Panc1 (cell line): ENCODE measurements at regions of chr5 and their contacts with region 1.

Region 1: GRCh38 chr5:138192826-138193225 is 13.9 kb downstream of the KIF20A start:
- DNase-seq: no peak
- ATAC-seq: no peak
- H3K4me3 ChIP-seq: no peak overlapping the region
- H3K27ac ChIP-seq: no peak overlapping the region
- H3K4me1 ChIP-seq: no peaks in the 10 kb centered on the region
- H3K27me3 ChIP-seq: no peaks in the 10 kb centered on the region
- CTCF ChIP-seq: no peak

Region 2: GRCh38 chr5:138178516-138179276 is 14.1 kb before region 1 on chr5 and contains the starts of genes BRD8 and KIF20A:
- CTCF ChIA-PET with region 1: no interaction called
- POLR2A ChIA-PET with region 1: interaction called, 10 read pairs
- in situ Hi-C with region 1: no loop called
- intact Hi-C with region 1: no loop called
- DNase-seq: peak; percentile 98
- ATAC-seq: peak; percentile 94
- H3K4me3 ChIP-seq: peak within 1 kb of the TSS; percentile 93 to 97
- H3K27ac ChIP-seq: peak within 1 kb of the TSS; percentile 100
- H3K4me1 ChIP-seq: peaks cover 22% of the 10 kb centered on the region
- H3K27me3 ChIP-seq: no peaks in the 10 kb centered on the region
- CTCF ChIP-seq: no peak
- total RNA-seq, gene BRD8: 92.1 TPM
- total RNA-seq, gene KIF20A: 55.4 TPM

Region 3: DNA sequence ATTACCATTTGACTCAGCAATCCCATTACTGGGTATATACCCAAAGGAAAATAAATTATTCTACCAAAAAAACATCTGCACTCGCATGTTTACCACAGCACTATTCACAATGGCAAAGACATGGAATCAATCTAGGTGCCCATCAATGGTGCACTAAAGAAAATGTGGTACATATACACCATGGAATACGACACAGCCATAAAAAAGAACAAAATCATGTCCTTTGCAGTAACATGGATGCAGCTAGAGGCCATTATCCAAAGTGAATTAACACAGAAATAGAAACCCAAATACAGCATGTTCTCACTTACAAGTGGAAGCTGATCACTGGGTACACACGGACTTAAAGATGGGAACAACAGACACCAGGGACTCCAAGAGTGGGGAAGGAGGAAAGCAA is 18.2 kb after region 1 on chr5:
- CTCF ChIA-PET with region 1: no interaction called
- POLR2A ChIA-PET with region 1: interaction called, 10 read pairs
- in situ Hi-C with region 1: no loop called
- intact Hi-C with region 1: no loop called
- DNase-seq: no peak
- ATAC-seq: no peak
- H3K4me3 ChIP-seq: no peak overlapping the region
- H3K27ac ChIP-seq: no peak overlapping the region
- H3K4me1 ChIP-seq: peaks cover 13% of the 10 kb centered on the region
- H3K27me3 ChIP-seq: no peaks in the 10 kb centered on the region
- CTCF ChIP-seq: no peak

Region 4: DNA sequence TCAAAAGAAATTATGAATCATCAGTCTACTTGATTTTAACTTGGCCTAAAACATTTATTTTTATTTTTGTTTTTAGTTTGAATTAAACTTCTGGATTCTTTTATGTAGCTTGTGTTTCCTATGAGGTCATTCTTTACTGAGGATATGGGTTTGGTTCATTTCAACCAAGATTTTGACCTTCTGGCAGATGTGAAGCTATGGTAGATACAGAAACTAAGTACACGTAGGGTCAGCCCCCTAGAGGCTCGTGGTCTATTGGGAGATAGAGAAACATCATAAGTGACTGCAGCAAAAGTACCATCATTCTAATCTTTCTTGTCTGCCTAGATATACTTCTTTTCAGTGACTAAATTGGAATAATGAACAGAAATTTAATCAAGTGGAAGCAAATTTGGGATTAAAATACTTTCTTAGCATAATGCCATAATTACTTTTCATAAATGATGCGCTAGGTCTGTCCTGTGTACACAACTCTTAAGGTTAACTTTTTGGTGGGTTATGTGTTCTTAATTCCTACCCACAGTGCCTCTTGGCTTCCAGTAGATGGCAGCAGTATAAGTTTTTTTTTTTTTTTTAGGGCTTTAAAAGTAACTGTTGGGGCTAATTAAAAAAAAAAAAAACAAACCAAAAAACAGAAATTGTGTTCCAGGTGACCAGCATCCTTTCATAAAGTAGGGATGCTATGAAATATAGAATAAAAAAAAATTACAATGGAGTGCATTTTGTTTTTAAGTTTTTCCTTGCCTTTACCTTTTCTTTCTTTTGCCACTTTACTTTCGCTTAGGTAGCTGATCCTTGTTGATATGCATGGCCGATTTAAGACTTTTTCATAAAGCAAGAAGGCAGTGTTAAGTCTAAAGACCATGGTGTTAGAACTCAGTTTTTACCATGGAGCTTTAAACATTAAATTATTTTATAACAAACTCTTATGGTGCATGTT is 632.4 kb after region 1 on chr5:
- CTCF ChIA-PET with region 1: no interaction called
- POLR2A ChIA-PET with region 1: no interaction called
- in situ Hi-C with region 1: no loop called
- intact Hi-C with region 1: no loop called
- DNase-seq: no peak
- ATAC-seq: peak; percentile 63; the same call in 1 of the 2 replicates
- H3K4me3 ChIP-seq: no peak overlapping the region
- H3K27ac ChIP-seq: no peak overlapping the region
- H3K4me1 ChIP-seq: no peaks in the 10 kb centered on the region
- H3K27me3 ChIP-seq: no peaks in the 10 kb centered on the region
- CTCF ChIP-seq: peak; percentile 73; the same call in 1 of the 2 replicates